ENCODE measurements at regions of chr17 and their contacts with region 1.

Region 1: DNA sequence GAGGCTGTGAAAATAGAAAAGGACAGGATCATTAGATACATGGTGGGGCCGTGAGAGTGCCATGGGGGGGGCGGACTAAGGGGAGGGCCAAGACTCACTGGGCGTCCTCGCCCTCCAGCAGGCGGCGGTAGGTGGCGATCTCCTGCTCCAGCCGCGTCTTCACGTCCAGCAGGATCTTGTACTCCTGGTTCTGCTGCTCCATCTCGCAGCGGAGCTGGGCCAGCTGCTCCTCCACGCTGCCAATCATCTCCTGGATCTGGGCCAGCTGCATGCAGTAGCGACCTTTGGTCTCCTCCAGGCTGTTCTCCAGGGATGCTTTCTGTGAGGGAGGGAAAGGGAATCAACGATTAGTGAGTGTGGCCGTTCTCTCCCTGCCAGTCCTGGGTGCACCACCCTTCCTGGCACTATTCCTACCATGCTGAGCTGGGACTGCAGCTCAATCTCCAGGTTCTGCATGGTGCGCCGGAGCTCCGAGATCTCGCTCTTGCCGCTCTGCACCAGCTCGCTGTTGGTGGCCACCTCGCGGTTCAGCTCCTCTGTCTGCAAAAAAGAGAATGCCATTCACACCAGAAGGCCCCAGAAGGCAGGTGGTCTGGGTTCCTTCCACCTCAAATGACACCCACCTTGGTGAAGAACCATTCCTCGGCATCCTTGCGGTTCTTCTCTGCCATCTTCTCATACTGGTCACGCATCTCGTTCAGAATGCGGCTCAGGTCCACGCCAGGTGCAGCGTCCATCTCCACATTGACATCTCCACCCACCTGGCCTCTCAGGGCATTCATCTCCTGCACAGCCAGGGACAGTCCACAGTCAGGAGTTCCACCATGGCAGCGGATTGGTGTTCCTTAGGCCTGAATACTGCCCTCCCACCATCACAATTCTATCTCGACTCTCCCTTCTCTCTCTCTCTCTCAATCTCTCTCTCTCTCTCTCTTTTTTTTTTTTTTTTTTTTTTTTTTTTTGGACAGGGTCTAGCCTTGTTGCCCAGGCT is 3.3 kb downstream of the KRT14 start:
- DNase-seq: no peak
- H3K4me3 ChIP-seq: no peak overlapping the region
- H3K27ac ChIP-seq: no peak overlapping the region
- H3K4me1 ChIP-seq: no peaks in the 10 kb centered on the region
- H3K27me3 ChIP-seq: no peaks in the 10 kb centered on the region
- CTCF ChIP-seq: no peak
- EP300 ChIP-seq: no peak
- POLR2A ChIP-seq: no peak

Region 2: GRCh38 chr17:41602524-41602923 is 19.1 kb after region 1 on chr17:
- intact Hi-C with region 1: loop called in 1 of 4 experiments (anchors 2 kb)
- DNase-seq: no peak
- H3K4me3 ChIP-seq: no peak overlapping the region
- H3K27ac ChIP-seq: no peak overlapping the region
- H3K4me1 ChIP-seq: no peaks in the 10 kb centered on the region
- H3K27me3 ChIP-seq: no peaks in the 10 kb centered on the region
- CTCF ChIP-seq: no peak
- EP300 ChIP-seq: no peak
- POLR2A ChIP-seq: no peak